Upper lobe of right lung (tissue), 1 donor: ENCODE measurements at regions of chr2 and their contacts with region 1.

Region 1: DNA sequence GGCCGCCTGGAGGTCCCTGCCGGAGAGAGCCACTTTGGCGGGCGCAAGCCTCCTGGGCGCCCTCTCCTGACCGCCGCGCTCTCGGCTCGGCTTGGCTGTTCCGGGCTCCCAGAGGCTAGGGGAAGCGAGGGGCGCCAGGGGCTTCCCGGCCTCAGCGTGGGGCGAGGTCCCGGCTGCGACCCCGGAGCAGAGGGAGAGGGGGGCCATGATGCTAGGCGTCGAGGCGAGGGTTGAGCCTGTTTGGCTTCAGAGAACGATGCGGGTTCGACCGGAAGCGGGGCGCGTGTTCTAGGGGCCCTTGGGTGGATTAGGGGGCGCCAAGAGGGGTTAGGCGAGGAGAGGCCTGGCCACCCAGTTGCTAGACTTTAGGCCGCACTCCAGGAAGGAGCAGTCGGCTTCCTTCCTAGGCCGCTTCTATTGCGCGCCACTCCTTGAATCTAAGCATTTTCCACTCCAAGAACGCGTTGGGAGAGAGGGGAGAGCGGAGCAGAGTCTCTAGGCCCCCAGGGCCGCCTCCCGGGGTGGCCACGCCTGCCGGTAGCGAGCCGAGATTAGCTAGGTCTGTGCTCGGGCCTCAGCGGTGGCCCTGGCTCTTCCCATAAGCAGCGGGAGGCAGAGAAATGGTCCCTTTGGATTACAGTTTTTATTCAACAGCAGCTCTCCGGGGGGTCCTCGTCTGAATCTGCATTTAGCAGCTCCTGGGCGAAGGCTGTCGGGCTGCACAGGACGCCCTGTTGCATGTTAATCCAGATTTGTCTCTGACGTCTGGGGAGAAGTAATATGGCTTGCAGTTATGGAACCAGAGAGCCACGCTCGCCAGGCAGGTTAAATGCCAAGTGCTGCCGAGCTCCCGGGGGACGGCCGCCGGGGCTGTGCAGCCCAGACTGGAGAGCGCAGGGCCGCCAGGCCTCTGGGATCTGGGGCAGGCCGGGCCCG is 11.3 kb downstream of the MEIS1 start:
- DNase-seq: no peak
- ATAC-seq: peak; percentile 48
- H3K4me3 ChIP-seq: peak overlapping the region; percentile 67
- H3K27ac ChIP-seq: peak overlapping the region; percentile 93
- H3K4me1 ChIP-seq: peaks cover 4% of the 10 kb centered on the region
- H3K27me3 ChIP-seq: peaks cover 11% of the 10 kb centered on the region
- CTCF ChIP-seq: peak; percentile 11

Region 2: DNA sequence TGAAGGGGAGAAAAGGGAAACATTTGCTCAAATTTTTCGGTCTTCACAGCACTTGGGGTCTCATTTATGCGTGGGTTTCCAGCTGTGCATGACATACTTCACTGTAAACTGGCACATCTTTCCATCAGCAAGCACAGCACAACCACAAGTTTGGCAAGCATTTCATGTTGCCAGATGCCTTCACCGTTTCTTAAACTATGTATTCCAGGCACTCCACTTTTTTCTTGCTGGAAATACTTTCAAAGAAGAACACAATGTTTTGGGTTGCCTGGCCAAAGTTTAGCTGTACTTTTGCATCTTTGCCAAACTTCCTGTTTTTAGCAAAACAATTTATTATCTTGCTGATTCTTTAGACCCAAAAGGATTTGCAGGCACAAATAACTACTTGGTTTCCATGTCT is 205.9 kb before region 1 on chr2:
- intact Hi-C with region 1: no loop called
- DNase-seq: no peak
- ATAC-seq: no peak
- H3K4me3 ChIP-seq: no peak overlapping the region
- H3K27ac ChIP-seq: peak overlapping the region; percentile 51
- H3K4me1 ChIP-seq: no peaks in the 10 kb centered on the region
- H3K27me3 ChIP-seq: no peaks in the 10 kb centered on the region
- CTCF ChIP-seq: no peak

Region 3: DNA sequence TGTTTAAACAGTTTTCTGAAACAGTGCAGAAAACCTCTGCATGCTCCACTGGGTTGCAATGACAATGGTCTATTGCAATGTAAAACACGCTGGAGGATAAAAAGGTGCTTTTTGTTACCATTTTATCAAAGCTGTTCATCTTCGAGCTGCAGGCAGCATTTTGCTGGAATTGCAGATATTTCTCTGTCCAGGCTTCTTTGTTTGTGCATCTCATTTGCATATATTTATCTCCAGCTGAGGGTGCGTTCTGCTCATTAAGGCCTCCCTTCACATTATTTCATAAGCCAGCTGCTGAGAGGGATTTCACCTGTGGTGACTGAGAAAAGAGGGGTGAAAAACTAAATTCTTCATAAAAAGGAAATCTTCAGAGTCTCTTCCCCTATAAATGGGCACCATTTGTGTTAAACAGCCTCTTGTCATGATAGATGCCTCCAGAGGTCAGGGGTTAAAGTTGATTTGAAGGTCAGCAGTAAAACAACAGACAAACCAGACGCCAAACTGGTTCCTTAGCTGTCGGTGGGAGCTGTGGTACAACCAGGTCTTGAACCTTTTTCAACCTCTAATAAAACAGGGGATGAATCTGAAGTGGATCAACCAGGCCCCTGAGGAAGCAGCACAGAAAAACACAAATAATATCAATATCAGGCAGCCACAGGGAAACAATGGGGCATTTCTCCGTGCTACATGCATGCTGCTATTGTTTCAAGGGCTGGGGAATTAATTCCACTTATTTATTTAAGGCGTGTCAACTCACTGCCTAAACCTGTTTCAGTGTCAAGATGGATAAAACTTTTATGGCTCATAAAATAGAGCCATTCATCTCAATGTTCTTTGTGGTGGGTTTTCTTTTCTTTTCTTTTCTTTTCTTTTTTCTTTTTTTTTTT is 253.8 kb after region 1 on chr2:
- intact Hi-C with region 1: loop called (anchors 10 kb)
- DNase-seq: no peak
- ATAC-seq: no peak
- H3K4me3 ChIP-seq: no peak overlapping the region
- H3K27ac ChIP-seq: no peak overlapping the region
- H3K4me1 ChIP-seq: no peaks in the 10 kb centered on the region
- H3K27me3 ChIP-seq: no peaks in the 10 kb centered on the region
- CTCF ChIP-seq: no peak

Region 4: GRCh38 chr2:67268806-67269205 is 822.6 kb after region 1 on chr2:
- intact Hi-C with region 1: no loop called
- DNase-seq: no peak
- ATAC-seq: no peak
- H3K4me3 ChIP-seq: no peak overlapping the region
- H3K27ac ChIP-seq: no peak overlapping the region
- H3K4me1 ChIP-seq: no peaks in the 10 kb centered on the region
- H3K27me3 ChIP-seq: no peaks in the 10 kb centered on the region
- CTCF ChIP-seq: no peak